Heart left ventricle (tissue), 16 donors: ENCODE measurements at regions of chr7 and their contacts with region 1.

Region 1: DNA sequence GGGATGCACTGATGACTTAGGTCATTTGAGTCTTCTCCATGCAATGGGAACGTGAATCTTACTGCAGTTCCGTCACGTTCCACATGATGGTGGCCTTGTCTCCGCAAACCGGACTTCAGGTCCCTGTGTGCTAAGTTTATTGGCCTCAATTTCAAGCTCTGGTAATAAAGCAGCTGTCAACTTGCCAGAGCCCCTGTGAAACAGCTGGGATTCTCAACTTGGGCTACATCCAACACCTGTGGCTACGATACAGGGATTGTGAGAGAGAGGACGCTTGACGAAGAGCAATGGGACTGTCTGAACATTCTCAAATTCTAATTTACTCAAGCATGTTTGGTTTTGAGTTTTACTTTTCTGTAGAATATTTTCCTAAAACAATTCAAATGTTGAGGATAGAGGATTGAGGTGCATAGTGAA is 174.2 kb downstream of the PTN start:
- DNase-seq: peak in 4 of 5 donors; percentile 33 to 68 (median 45)
- ATAC-seq: peak; percentile 47 to 88 (median 68)
- H3K4me3 ChIP-seq: no peak overlapping the region
- H3K27ac ChIP-seq: no peak overlapping the region
- H3K4me1 ChIP-seq: peaks cover 0 to 3% (median 0%) of the 10 kb centered on the region in 12 donors
- H3K27me3 ChIP-seq: no peaks in the 10 kb centered on the region
- CTCF ChIP-seq: peak; percentile 29 to 79 (median 63)
- POLR2A ChIP-seq: no peak

Region 2: DNA sequence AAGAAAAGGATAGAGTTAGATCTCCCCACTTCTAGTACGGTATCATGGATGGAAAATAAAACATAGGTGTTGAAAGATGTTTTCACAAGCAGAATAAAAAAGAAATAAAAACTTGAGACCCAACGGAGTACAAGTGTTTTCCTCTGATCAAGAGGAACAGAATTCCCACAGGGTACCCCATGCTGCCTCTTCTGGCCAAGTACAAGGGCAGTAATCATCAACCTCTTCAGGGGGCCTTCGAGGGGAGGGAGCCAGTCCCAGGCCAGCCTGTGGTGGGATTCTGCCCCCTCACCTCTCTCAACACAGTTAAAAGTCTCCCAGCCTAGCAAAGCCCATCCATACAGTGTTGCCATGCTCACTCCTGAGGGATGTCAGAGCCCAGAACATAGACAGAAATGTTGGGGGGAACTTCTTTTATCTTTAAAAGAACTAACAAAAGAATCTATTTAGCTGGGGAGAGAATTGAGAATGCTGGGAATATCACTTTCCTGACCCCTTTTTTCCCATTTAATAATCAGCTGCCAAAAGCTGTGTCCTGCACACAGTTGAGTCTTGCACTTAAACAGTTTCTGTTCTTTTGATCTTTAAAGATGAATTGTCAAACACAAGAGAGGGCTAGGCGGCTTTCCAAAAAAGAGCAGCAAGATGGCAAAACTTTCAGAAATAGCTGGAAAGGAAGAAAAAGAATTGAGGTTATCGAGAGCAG is 72.5 kb after region 1 on chr7:
- intact Hi-C with region 1: no loop called
- DNase-seq: no peak
- ATAC-seq: no peak
- H3K4me3 ChIP-seq: no peak overlapping the region
- H3K27ac ChIP-seq: no peak overlapping the region
- H3K4me1 ChIP-seq: no peaks in the 10 kb centered on the region
- H3K27me3 ChIP-seq: no peaks in the 10 kb centered on the region
- CTCF ChIP-seq: no peak
- POLR2A ChIP-seq: no peak

Region 3: DNA sequence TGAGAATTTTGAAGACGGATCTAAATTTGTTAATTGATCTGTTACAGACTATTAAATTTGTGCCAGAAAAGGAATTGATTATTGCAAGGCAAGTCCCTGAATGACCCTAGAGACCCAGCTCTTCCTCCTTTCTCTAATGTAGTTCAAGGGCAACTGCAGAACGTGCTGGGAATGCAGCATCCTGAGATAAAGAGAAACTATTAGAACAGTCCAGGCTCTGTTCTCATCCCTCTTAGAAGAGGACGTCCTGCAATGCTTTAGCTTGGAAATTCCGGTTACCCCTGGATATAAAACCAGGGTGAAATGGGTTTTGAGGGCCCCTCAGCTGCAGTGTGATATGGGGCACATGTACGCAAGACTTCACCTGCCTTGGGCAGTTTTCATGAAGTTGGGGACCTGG is 106.9 kb after region 1 on chr7:
- intact Hi-C with region 1: no loop called
- DNase-seq: no peak
- ATAC-seq: no peak
- H3K4me3 ChIP-seq: no peak overlapping the region
- H3K27ac ChIP-seq: no peak overlapping the region
- H3K4me1 ChIP-seq: no peaks in the 10 kb centered on the region
- H3K27me3 ChIP-seq: no peaks in the 10 kb centered on the region
- CTCF ChIP-seq: no peak
- POLR2A ChIP-seq: no peak

Region 4: GRCh38 chr7:137454246-137454724 is 285.0 kb after region 1 on chr7:
- intact Hi-C with region 1: loop called in 9 of 10 experiments (anchors 1 to 10 kb)
- DNase-seq: no peak
- ATAC-seq: peak in 3 of 4 donors; percentile 54 to 74 (median 66)
- H3K4me3 ChIP-seq: peak overlapping the region in 6 of 12 donors; percentile 13 to 44 (median 20)
- H3K27ac ChIP-seq: peak overlapping the region in 9 of 12 donors; percentile 17 to 75 (median 56)
- H3K4me1 ChIP-seq: peaks cover 0 to 19% (median 6%) of the 10 kb centered on the region in 12 donors
- H3K27me3 ChIP-seq: no peaks in the 10 kb centered on the region
- CTCF ChIP-seq: peak; percentile 53 to 82 (median 66)
- POLR2A ChIP-seq: no peak

Region 5: DNA sequence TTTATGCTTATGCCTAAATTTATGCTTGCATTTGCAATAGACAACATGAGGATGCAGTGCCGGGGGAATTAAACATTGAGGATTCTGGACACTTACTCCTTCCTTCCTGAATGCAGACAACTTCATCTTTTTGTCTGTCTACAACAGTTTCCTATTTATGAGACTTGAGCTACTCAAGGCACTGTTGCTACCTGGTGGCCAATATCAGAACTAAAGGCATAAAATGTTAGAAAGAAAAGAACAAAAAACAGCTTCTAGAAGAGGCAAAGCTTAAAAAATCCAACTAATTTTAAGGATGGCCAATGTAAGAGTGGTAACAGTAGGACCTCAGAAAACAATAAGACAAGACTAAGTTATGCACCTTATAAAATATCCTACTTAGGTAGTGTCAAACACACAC is 318.7 kb after region 1 on chr7:
- intact Hi-C with region 1: loop called in 2 of 10 experiments (anchors 5 to 10 kb)
- DNase-seq: no peak
- ATAC-seq: no peak
- H3K4me3 ChIP-seq: no peak overlapping the region
- H3K27ac ChIP-seq: no peak overlapping the region
- H3K4me1 ChIP-seq: no peaks in the 10 kb centered on the region
- H3K27me3 ChIP-seq: no peaks in the 10 kb centered on the region
- CTCF ChIP-seq: peak in 4 of 12 donors; percentile 15 to 29 (median 26)
- POLR2A ChIP-seq: no peak

Region 6: DNA sequence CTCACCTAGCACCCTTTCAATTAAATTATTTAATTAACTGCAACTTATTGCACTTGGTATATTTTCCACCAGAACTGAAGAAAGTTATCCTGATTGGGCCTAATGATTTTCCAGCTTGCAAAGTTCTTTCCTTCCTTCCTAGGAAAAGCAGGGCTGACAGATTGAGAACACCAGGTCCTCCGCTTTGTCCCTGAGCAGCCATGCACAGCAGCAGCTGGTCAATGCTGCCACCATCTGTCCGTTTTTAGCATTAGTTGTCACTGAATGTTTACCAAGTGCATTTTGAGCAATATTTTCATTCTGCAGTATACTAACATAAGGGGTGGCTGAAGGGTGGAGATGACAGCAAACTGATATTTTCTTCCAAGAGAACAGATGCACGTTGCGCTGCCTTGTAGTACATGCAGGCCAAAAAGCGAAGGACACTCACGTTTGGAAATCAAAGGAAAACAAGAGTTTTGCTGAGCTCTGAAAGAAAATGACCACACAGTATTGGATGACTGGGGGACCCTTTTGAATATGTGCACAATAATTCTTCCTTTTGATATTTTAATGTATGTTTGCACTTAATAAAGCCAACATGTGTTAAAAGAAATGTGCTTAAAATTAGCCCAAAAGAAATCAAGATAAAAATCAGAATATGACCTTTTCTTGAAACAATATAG is 423.1 kb after region 1 on chr7:
- intact Hi-C with region 1: loop called in 8 of 10 experiments (anchors 2 to 5 kb)
- DNase-seq: peak; percentile 46 to 58 (median 55)
- ATAC-seq: peak in 3 of 4 donors; percentile 80 to 93 (median 82)
- H3K4me3 ChIP-seq: no peak overlapping the region
- H3K27ac ChIP-seq: peak overlapping the region in 1 of 12 donors; percentile 35
- H3K4me1 ChIP-seq: peaks cover 0 to 13% (median 0%) of the 10 kb centered on the region in 12 donors
- H3K27me3 ChIP-seq: no peaks in the 10 kb centered on the region
- CTCF ChIP-seq: peak; percentile 53 to 84 (median 71)
- POLR2A ChIP-seq: no peak